ENCODE measurements at regions of chr5 and their contacts with region 1.

Region 1: GRCh38 chr5:171927345-171927941 is 79.0 kb downstream of the FBXW11 start:
- DNase-seq: no peak
- ATAC-seq: no peak
- H3K4me3 ChIP-seq: no peak overlapping the region
- H3K27ac ChIP-seq: no peak overlapping the region
- H3K4me1 ChIP-seq: peaks cover 0 to 14% (median 7%) of the 10 kb centered on the region in 9 donors
- H3K27me3 ChIP-seq: no peaks in the 10 kb centered on the region
- CTCF ChIP-seq: peak in 2 of 9 donors; percentile 8 to 27

Region 2: DNA sequence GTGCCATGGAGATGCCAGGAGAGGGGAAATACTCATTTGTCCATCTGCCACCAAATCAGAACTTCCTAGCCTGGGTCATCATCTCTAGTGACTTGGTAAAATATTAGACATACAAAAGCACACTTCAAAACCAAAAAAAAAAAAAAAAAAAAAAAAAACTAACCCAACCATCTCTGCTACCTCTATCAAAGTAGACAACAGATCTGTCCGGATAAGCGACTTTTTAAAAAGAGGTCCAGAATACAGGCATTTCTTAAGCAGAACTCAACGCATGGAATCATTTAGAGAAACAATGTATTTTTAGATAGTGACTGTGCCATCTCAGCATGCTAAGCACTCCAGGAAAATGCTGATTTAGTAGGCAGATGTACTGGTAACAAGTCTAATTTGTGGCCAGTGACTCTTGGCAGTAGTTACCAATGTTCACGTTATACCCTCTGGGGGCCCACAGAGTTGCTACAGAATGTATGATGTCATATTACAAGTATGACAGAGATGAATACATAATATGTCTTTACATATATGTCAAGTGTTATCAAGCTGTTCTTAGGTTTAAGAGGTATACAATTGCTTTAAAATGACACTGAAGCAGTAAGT is 34.1 kb before region 1 on chr5:
- intact Hi-C with region 1: no loop called
- DNase-seq: no peak
- ATAC-seq: peak in 4 of 8 donors; percentile 21 to 45 (median 35)
- H3K4me3 ChIP-seq: no peak overlapping the region
- H3K27ac ChIP-seq: peak overlapping the region in 2 of 10 donors; percentile 5 to 27
- H3K4me1 ChIP-seq: peaks cover 0 to 55% (median 21%) of the 10 kb centered on the region in 9 donors
- H3K27me3 ChIP-seq: no peaks in the 10 kb centered on the region
- CTCF ChIP-seq: no peak

Region 3: GRCh38 chr5:171984748-171985419 is 57.4 kb after region 1 on chr5:
- intact Hi-C with region 1: loop called in 1 of 10 experiments (anchors 5 kb)
- DNase-seq: no peak
- ATAC-seq: no peak
- H3K4me3 ChIP-seq: no peak overlapping the region
- H3K27ac ChIP-seq: no peak overlapping the region
- H3K4me1 ChIP-seq: peaks cover 0 to 46% (median 22%) of the 10 kb centered on the region in 9 donors
- H3K27me3 ChIP-seq: no peaks in the 10 kb centered on the region
- CTCF ChIP-seq: no peak